ENCODE measurements at regions of chr17 and their contacts with region 1.

Region 1: DNA sequence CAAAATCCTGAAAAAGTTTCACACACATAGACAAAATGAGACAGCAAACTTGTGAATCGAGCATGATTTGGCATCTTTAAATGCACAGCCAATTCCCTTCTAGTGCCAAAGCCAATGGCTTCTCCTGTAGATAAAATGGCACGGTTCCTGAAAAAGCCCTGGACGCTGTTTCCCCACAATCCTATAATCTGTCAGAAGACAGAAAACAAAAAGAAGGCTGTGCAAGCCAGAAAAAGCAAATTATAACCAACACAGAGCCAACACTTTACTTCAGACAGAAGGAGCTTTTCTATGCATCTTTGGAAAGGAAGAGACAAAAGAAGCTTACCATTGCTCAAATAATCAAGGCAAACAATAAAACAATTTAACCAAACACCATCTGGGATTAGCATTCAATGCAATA is 23.8 kb downstream of the FAM222B start:
- DNase-seq: no peak
- H3K4me3 ChIP-seq: no peak overlapping the region
- H3K27ac ChIP-seq: no peak overlapping the region
- H3K4me1 ChIP-seq: peaks cover 0 to 6% (median under 1%) of the 10 kb centered on the region in 4 donors
- H3K27me3 ChIP-seq: no peaks in the 10 kb centered on the region
- CTCF ChIP-seq: no peak

Region 2: DNA sequence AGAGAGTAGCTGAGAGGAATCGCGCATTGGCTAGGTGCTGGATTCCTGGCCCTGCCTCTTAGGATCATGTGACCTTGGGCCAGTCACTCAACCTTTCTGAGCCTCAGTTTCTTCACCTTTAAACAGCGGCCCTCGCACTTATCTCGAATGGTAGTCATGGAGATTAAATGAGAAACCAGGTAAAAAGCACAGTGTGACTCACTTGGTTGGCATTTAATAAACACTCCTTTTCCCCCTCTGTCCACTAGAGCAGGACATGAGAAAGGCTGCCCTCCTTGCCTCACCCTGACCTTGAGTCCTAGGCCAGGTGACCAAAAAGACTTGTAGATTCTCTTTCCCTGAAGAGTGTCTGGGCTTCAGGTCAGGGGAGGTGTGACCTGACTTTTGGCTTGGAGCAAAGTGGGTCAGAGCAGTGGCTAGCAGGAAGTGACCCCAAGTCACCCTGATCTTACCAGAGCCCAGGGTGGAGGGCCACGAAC is 289.2 kb after region 1 on chr17:
- intact Hi-C with region 1: no loop called
- DNase-seq: no peak
- H3K4me3 ChIP-seq: no peak overlapping the region
- H3K27ac ChIP-seq: no peak overlapping the region
- H3K4me1 ChIP-seq: peaks cover 0 to 16% (median 6%) of the 10 kb centered on the region in 4 donors
- H3K27me3 ChIP-seq: no peaks in the 10 kb centered on the region
- CTCF ChIP-seq: no peak

Region 3: GRCh38 chr17:29389982-29390850 is 571.4 kb after region 1 on chr17 and contains the start of gene TAOK1:
- intact Hi-C with region 1: loop called (anchors 5 kb)
- DNase-seq: peak; percentile 99 to 100
- H3K4me3 ChIP-seq: peak within 1 kb of the TSS; percentile 66 to 86
- H3K27ac ChIP-seq: peak within 1 kb of the TSS; percentile 92 to 97
- H3K4me1 ChIP-seq: peaks cover 0 to 34% (median 17%) of the 10 kb centered on the region in 4 donors
- H3K27me3 ChIP-seq: no peaks in the 10 kb centered on the region
- CTCF ChIP-seq: peak in 1 of 2 experiments; percentile 13